ENCODE measurements at regions of chr20 and their contacts with region 1.

Region 1: DNA sequence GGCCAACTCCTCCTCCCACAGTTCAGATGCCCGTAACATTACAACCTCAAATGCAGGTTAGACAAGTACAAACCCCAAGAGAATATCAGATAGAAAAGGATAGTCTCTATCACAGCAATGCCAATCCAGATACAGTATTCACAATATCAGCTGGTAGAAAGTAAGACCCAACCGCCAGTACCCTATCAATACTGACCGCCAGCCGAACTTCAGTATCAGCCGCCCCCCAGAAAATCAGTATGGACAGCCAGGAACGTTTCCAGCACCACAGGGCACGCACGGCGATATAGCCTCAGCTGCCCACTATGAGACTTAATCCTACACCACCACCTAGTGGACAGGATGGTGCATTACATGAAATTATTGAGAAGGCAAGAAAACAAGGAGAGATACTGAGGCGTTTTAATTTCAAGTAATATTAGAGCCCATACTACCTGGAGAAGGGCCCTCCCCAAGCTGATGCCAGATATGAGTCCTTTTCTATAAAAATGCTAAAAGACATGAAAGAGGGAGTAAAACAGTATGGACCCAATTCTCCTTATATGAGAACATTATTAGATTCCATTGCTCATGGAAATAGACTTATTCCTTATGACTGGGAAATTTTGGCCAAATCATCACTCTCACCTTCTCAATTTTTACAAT is 17.6 kb upstream of the EIF2S2 start:
- DNase-seq: peak; percentile 37 to 70
- ATAC-seq: peak; percentile 86 to 97 (median 94)
- H3K4me3 ChIP-seq: peak overlapping the region; percentile 31
- H3K27ac ChIP-seq: no peak overlapping the region
- H3K4me1 ChIP-seq: peaks cover 2% of the 10 kb centered on the region
- H3K27me3 ChIP-seq: no peaks in the 10 kb centered on the region
- CTCF ChIP-seq: peak; percentile 93

Region 2: GRCh38 chr20:33791959-33792597 is 337.6 kb before region 1 on chr20:
- intact Hi-C with region 1: loop called in 1 of 2 experiments (anchors 10 kb)
- DNase-seq: peak; percentile 39 to 67
- ATAC-seq: peak in 3 of 4 donors; percentile 25 to 61 (median 35)
- H3K4me3 ChIP-seq: no peak overlapping the region
- H3K27ac ChIP-seq: no peak overlapping the region
- H3K4me1 ChIP-seq: peaks cover 16% of the 10 kb centered on the region
- H3K27me3 ChIP-seq: no peaks in the 10 kb centered on the region
- CTCF ChIP-seq: peak; percentile 69

Region 3: GRCh38 chr20:33862709-33863403 is 266.8 kb before region 1 on chr20:
- intact Hi-C with region 1: loop called (anchors 5 kb)
- DNase-seq: peak; percentile 40 to 65
- ATAC-seq: peak; percentile 50 to 68 (median 64)
- H3K4me3 ChIP-seq: peak overlapping the region; percentile 22
- H3K27ac ChIP-seq: no peak overlapping the region
- H3K4me1 ChIP-seq: peaks cover 4% of the 10 kb centered on the region
- H3K27me3 ChIP-seq: no peaks in the 10 kb centered on the region
- CTCF ChIP-seq: peak; percentile 54

Region 4: GRCh38 chr20:33933469-33933909 is 196.2 kb before region 1 on chr20:
- intact Hi-C with region 1: loop called in 1 of 2 experiments (anchors 5 kb)
- DNase-seq: peak; percentile 54 to 75
- ATAC-seq: peak; percentile 88 to 97 (median 94)
- H3K4me3 ChIP-seq: no peak overlapping the region
- H3K27ac ChIP-seq: no peak overlapping the region
- H3K4me1 ChIP-seq: no peaks in the 10 kb centered on the region
- H3K27me3 ChIP-seq: no peaks in the 10 kb centered on the region
- CTCF ChIP-seq: peak; percentile 43